A549 (cell line): ENCODE measurements at regions of chr3 and their contacts with region 1.

Region 1: DNA sequence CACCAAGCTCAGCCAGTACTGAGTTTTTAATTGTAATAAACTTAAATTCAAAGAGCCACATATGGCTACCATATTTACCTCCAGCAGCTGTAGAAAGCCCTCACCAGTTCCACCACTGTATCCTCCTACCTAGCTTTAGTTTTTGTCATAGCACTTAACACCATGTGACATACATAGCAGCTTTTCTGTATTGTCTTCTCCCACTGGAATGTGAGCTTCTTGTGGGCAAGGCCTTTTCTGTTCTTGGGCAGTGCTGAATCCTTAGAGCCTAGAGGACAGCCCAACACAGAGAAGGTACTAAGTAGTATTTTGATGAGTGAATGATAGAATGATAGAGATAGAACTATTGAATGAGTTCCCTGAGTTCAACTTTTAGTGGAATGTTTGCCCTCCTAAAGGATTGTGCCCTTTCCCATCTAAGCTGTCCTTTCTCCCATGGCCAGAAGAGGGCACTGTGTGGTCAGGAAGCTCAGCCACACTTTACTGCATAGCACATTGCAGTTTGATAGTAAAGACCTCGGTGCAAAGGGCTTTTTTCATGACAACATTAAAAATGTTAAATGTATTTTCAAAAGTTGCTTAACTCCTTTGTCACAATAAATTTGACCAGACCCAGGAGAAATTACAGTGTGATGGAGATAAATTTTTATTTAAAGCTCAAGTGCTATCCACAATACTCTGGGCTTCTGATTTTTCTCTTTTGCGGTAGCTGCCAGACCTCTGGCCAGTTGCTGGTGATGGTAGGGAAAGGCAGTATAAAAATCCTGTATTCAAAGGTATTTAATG is 115.8 kb downstream of the GHSR start:
- DNase-seq: peak; percentile 24 to 41
- ATAC-seq: peak; percentile 90 to 91
- H3K4me3 ChIP-seq: no peak overlapping the region
- H3K27ac ChIP-seq: peak overlapping the region; percentile 28 to 41; a peak in 4 of 6 replicates
- H3K4me1 ChIP-seq: peaks cover 5% of the 10 kb centered on the region
- CTCF ChIP-seq: peak; percentile 73
- EP300 ChIP-seq: no peak
- POLR2A ChIP-seq: no peak
- RAD21 ChIP-seq: peak; percentile 43 to 53; a peak in 4 of 5 replicates

Region 2: GRCh38 chr3:171936191-171936841 is 396.1 kb before region 1 on chr3:
- CTCF ChIA-PET with region 1: no interaction called
- POLR2A ChIA-PET with region 1: no interaction called
- DNase-seq: peak in 1 of 2 experiments; percentile 61
- ATAC-seq: peak; percentile 47 to 81; a peak in 4 of 6 replicates
- H3K4me3 ChIP-seq: no peak overlapping the region
- H3K27ac ChIP-seq: peak overlapping the region; percentile 54 to 66; a peak in 5 of 6 replicates
- H3K4me1 ChIP-seq: peaks cover 34% of the 10 kb centered on the region
- CTCF ChIP-seq: no peak
- EP300 ChIP-seq: no peak
- POLR2A ChIP-seq: no peak
- RAD21 ChIP-seq: no peak

Region 3: GRCh38 chr3:172315401-172316091 is 16.9 kb before region 1 on chr3:
- CTCF ChIA-PET with region 1: interaction called, 17 read pairs
- POLR2A ChIA-PET with region 1: interaction called, 5 read pairs
- DNase-seq: peak; percentile 21 to 39
- ATAC-seq: peak; percentile 14 to 23; a peak in 2 of 6 replicates
- H3K4me3 ChIP-seq: no peak overlapping the region
- H3K27ac ChIP-seq: peak overlapping the region; percentile 22 to 63; a peak in 3 of 6 replicates
- H3K4me1 ChIP-seq: peaks cover 47% of the 10 kb centered on the region
- CTCF ChIP-seq: no peak
- EP300 ChIP-seq: no peak
- POLR2A ChIP-seq: no peak
- RAD21 ChIP-seq: no peak

Region 4: GRCh38 chr3:172321035-172321434 is 11.4 kb before region 1 on chr3:
- CTCF ChIA-PET with region 1: interaction called, 17 read pairs
- POLR2A ChIA-PET with region 1: no interaction called
- DNase-seq: peak in 1 of 2 experiments; percentile 14
- ATAC-seq: peak in 1 of 2 experiments; percentile 29; a peak in 1 of 6 replicates
- H3K4me3 ChIP-seq: no peak overlapping the region
- H3K27ac ChIP-seq: no peak overlapping the region
- H3K4me1 ChIP-seq: peaks cover 51% of the 10 kb centered on the region
- CTCF ChIP-seq: no peak
- EP300 ChIP-seq: no peak
- POLR2A ChIP-seq: no peak
- RAD21 ChIP-seq: no peak

Region 5: GRCh38 chr3:172391592-172392302 is 59.3 kb after region 1 on chr3:
- CTCF ChIA-PET with region 1: no interaction called
- POLR2A ChIA-PET with region 1: no interaction called
- DNase-seq: no peak
- ATAC-seq: no peak
- H3K4me3 ChIP-seq: no peak overlapping the region
- H3K27ac ChIP-seq: no peak overlapping the region
- H3K4me1 ChIP-seq: no peaks in the 10 kb centered on the region; the same call in 2 of the 3 replicates
- CTCF ChIP-seq: no peak
- EP300 ChIP-seq: no peak
- POLR2A ChIP-seq: no peak
- RAD21 ChIP-seq: no peak